Prostate gland (tissue), 2 donors: ENCODE measurements at regions of chr7 and their contacts with region 1.

Region 1: GRCh38 chr7:85773116-85773728 is 586.4 kb upstream of the SEMA3D start:
- DNase-seq: no peak
- H3K4me3 ChIP-seq: no peak overlapping the region
- H3K27ac ChIP-seq: no peak overlapping the region
- H3K4me1 ChIP-seq: no peaks in the 10 kb centered on the region
- H3K27me3 ChIP-seq: no peaks in the 10 kb centered on the region
- CTCF ChIP-seq: no peak
- POLR2A ChIP-seq: no peak

Region 2: DNA sequence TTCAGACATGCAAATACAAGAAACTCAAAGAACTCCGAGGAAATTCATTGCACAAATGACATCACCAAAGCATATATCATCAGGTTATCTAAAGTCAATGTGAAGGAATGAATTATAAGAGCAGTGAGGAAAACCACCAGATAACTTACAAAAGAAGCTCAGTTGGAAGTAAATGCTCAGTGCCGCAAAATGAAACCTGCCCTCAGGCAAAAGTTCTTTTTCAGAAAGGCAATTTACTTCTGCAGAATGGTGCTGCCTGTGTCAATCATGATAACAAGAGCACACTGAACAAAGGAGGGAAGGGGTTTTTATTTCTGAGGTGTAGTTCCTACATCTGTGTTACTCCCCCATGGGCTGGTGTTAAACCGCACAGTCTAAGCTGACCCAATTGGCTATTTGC is 35.8 kb before region 1 on chr7:
- intact Hi-C with region 1: loop called (anchors 2 kb)
- DNase-seq: no peak
- H3K4me3 ChIP-seq: no peak overlapping the region
- H3K27ac ChIP-seq: no peak overlapping the region
- H3K4me1 ChIP-seq: no peaks in the 10 kb centered on the region
- H3K27me3 ChIP-seq: no peaks in the 10 kb centered on the region
- CTCF ChIP-seq: no peak
- POLR2A ChIP-seq: no peak